H1 (cell line): ENCODE measurements at regions of chr11 and their contacts with region 1.

Region 1: GRCh38 chr11:75248690-75249268 is 8.2 kb downstream of the TPBGL start:
- DNase-seq: peak; percentile 80 to 93
- H3K4me3 ChIP-seq: no peak overlapping the region
- H3K27ac ChIP-seq: no peak overlapping the region
- H3K4me1 ChIP-seq: no peaks in the 10 kb centered on the region
- H3K27me3 ChIP-seq: peaks cover 0 to 9% (median 4%) of the 10 kb centered on the region in 4 experiments; a peak in 6 of 7 replicates
- CTCF ChIP-seq: peak; percentile 96 to 100 (median 100)
- EP300 ChIP-seq: peak in 1 of 2 experiments; percentile 61; a peak in 1 of 3 replicates
- POLR2A ChIP-seq: no peak
- RAD21 ChIP-seq: peak; percentile 100

Region 2: GRCh38 chr11:75014129-75014528 is 234.7 kb before region 1 on chr11:
- CTCF ChIA-PET with region 1: interaction called, 10 read pairs
- POLR2A ChIA-PET with region 1: no interaction called
- DNase-seq: no peak
- H3K4me3 ChIP-seq: no peak overlapping the region
- H3K27ac ChIP-seq: no peak overlapping the region
- H3K4me1 ChIP-seq: no peaks in the 10 kb centered on the region
- H3K27me3 ChIP-seq: no peaks in the 10 kb centered on the region
- CTCF ChIP-seq: no peak
- EP300 ChIP-seq: no peak
- POLR2A ChIP-seq: no peak
- RAD21 ChIP-seq: no peak

Region 3: DNA sequence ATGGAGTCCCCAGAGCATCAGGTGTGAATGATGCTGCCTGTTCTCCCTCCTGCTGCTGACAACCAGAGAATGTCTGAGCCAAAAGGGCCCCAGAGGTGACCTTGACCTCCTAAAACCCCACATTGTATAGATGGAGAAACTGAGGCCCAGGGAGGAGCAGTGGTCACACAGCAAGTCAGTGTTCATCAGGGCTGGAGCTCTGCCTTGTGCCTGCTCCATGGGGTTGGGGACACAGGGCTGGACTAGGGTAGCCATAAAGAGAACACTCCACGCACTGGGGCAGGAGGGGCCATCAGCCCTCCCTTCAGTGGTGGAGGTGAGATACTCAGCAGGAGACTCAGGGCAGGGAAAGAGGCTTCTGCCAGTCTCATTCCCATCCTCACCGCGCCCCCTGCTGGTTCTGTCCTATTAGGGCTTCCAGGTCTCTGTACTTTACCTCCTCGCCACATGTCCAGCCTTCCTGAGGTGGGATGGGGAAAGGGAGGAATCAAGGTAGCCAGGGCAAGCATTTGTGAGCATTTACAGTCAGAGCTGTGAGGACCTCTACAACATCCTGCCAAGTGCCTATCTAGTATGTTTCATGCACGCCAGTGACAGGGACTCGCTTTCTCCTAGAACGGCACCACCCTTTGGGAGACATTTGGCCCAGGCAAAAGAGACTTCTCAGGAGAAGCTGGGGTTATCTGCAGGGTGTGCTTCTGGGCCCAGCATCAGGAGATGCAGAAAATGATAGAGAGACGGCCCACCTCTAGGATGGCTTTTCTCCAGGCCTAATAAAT is 216.8 kb before region 1 on chr11:
- CTCF ChIA-PET with region 1: interaction called, 15 read pairs
- POLR2A ChIA-PET with region 1: no interaction called
- DNase-seq: peak; percentile 39 to 93
- H3K4me3 ChIP-seq: no peak overlapping the region
- H3K27ac ChIP-seq: no peak overlapping the region
- H3K4me1 ChIP-seq: 0 out of 7 replicates have a peak, but pooled peaks cover 0 to 2% (median 0%) of the 10 kb centered on the region in 4 experiments
- H3K27me3 ChIP-seq: no peaks in the 10 kb centered on the region
- CTCF ChIP-seq: peak; percentile 79 to 92 (median 81)
- EP300 ChIP-seq: no peak
- POLR2A ChIP-seq: no peak
- RAD21 ChIP-seq: peak; percentile 62 to 70

Region 4: GRCh38 chr11:75182669-75183068 is 66.1 kb before region 1 on chr11:
- CTCF ChIA-PET with region 1: interaction called, 11 read pairs
- POLR2A ChIA-PET with region 1: no interaction called
- DNase-seq: no peak
- H3K4me3 ChIP-seq: no peak overlapping the region
- H3K27ac ChIP-seq: no peak overlapping the region
- H3K4me1 ChIP-seq: peaks cover 0 to 2% (median 0%) of the 10 kb centered on the region in 4 experiments; a peak in 1 of 7 replicates
- H3K27me3 ChIP-seq: no peaks in the 10 kb centered on the region
- CTCF ChIP-seq: no peak
- EP300 ChIP-seq: no peak
- POLR2A ChIP-seq: no peak
- RAD21 ChIP-seq: no peak

Region 5: GRCh38 chr11:75195121-75195551 is 53.6 kb before region 1 on chr11:
- CTCF ChIA-PET with region 1: interaction called, 726 read pairs
- POLR2A ChIA-PET with region 1: no interaction called
- DNase-seq: no peak
- H3K4me3 ChIP-seq: no peak overlapping the region
- H3K27ac ChIP-seq: no peak overlapping the region
- H3K4me1 ChIP-seq: peaks cover 0 to 6% (median 2%) of the 10 kb centered on the region in 4 experiments; a peak in 2 of 7 replicates
- H3K27me3 ChIP-seq: no peaks in the 10 kb centered on the region
- CTCF ChIP-seq: no peak
- EP300 ChIP-seq: no peak
- POLR2A ChIP-seq: no peak
- RAD21 ChIP-seq: no peak

Region 6: GRCh38 chr11:75263944-75264349 is 15.2 kb after region 1 on chr11:
- CTCF ChIA-PET with region 1: interaction called, 79 read pairs
- POLR2A ChIA-PET with region 1: interaction called, 4 read pairs
- DNase-seq: no peak
- H3K4me3 ChIP-seq: no peak overlapping the region
- H3K27ac ChIP-seq: no peak overlapping the region
- H3K4me1 ChIP-seq: peaks cover 0 to 4% (median under 1%) of the 10 kb centered on the region in 4 experiments; a peak in 1 of 7 replicates
- H3K27me3 ChIP-seq: no peaks in the 10 kb centered on the region
- CTCF ChIP-seq: no peak
- EP300 ChIP-seq: no peak
- POLR2A ChIP-seq: no peak
- RAD21 ChIP-seq: no peak

Region 7: DNA sequence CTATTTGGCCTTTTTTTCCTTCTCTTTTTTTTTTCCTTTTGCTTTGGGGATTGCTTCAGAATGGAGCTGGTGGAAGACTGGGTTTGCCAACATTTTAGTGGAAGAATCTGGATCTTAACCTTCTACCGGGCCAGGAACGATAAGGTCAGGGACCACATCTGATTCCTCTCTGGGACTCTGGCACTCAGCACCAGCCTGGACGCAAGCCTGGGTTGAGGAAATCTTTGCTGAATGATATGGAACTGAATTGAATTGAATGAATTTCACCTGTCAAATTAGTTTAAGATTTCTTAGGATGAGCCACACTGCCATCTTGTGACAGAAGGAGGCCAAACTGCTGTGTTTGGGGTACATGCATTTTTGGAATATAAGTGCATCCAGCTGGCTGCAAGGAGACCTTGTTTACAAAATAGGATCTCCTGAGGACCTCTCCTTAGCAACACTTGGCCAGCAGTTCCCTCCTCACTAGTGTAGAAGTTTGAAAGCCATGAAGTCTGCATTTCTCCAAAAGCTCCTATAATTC is 22.2 kb after region 1 on chr11:
- CTCF ChIA-PET with region 1: interaction called, 79 read pairs
- POLR2A ChIA-PET with region 1: no interaction called
- DNase-seq: no peak
- H3K4me3 ChIP-seq: no peak overlapping the region
- H3K27ac ChIP-seq: no peak overlapping the region
- H3K4me1 ChIP-seq: peaks cover 0 to 2% (median 0%) of the 10 kb centered on the region in 4 experiments; a peak in 1 of 7 replicates
- H3K27me3 ChIP-seq: no peaks in the 10 kb centered on the region
- CTCF ChIP-seq: peak in 2 of 3 experiments; percentile 41 to 60; a peak in 3 of 4 replicates
- EP300 ChIP-seq: no peak
- POLR2A ChIP-seq: no peak
- RAD21 ChIP-seq: peak; percentile 47 to 60